Activated CD4-positive, alpha-beta T cell treated with anti-CD3 and anti-CD28 coated beads for 36 hours (primary cell): ENCODE measurements at regions of chr6 and their contacts with region 1.

Region 1: GRCh38 chr6:121055572-121056163 is 278.6 kb downstream of the TBC1D32 start:
- DNase-seq: no peak
- ATAC-seq: peak; percentile 47
- H3K4me3 Mint-ChIP-seq: no peak overlapping the region
- H3K27ac Mint-ChIP-seq: no peak overlapping the region
- H3K4me1 Mint-ChIP-seq: no peaks in the 10 kb centered on the region
- H3K27me3 Mint-ChIP-seq: no peaks in the 10 kb centered on the region

Region 2: GRCh38 chr6:121305957-121306607 is 250.4 kb after region 1 on chr6:
- CTCF ChIA-PET with region 1: interaction called, 8 read pairs
- POLR2A ChIA-PET with region 1: no interaction called
- intact Hi-C with region 1: loop called (anchors 1 kb)
- DNase-seq: no peak
- ATAC-seq: no peak
- H3K4me3 Mint-ChIP-seq: no peak overlapping the region
- H3K27ac Mint-ChIP-seq: no peak overlapping the region
- H3K4me1 Mint-ChIP-seq: peaks cover 4% of the 10 kb centered on the region
- H3K27me3 Mint-ChIP-seq: no peaks in the 10 kb centered on the region

Region 3: GRCh38 chr6:121399966-121400365 is 344.3 kb after region 1 on chr6:
- CTCF ChIA-PET with region 1: no interaction called
- POLR2A ChIA-PET with region 1: no interaction called
- intact Hi-C with region 1: loop called (anchors 1 to 5 kb)
- DNase-seq: no peak
- ATAC-seq: no peak
- H3K4me3 Mint-ChIP-seq: no peak overlapping the region
- H3K27ac Mint-ChIP-seq: no peak overlapping the region
- H3K4me1 Mint-ChIP-seq: no peaks in the 10 kb centered on the region
- H3K27me3 Mint-ChIP-seq: peaks cover 9% of the 10 kb centered on the region

Region 4: GRCh38 chr6:121849477-121849876 is 793.8 kb after region 1 on chr6:
- CTCF ChIA-PET with region 1: no interaction called
- POLR2A ChIA-PET with region 1: no interaction called
- intact Hi-C with region 1: loop called (anchors 1 to 10 kb)
- DNase-seq: peak; percentile 52
- ATAC-seq: peak; percentile 70
- H3K4me3 Mint-ChIP-seq: no peak overlapping the region
- H3K27ac Mint-ChIP-seq: no peak overlapping the region
- H3K4me1 Mint-ChIP-seq: peaks cover 14% of the 10 kb centered on the region
- H3K27me3 Mint-ChIP-seq: no peaks in the 10 kb centered on the region

Region 5: DNA sequence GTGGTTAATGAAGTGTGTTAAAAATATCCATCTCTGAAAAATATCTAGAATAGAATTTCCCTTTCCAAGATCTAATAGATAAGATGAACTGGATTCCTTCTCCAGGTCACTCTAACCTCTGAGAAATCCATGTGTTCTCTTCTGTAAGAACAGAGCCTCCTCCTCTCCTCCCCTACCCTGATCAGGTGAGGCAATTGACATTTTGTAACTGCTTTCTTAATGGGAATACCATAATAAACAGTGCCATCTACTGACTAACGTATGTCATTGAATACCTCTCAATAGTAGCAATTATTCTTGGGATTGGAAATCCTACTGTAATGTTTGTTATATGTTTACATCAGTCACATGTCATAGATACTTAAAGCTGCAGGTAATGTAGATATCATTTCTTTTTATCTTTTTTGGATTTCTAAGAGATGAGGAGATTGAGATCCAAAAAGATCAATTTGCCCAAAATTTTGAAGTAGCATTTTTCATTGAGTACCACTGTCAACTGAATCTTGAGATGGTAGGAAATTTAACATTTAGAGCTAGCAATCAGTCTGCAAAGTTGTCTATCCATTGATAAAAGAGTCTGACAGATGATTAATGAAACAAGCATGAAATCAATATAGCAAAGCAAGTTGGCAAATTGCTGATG is 978.0 kb after region 1 on chr6:
- CTCF ChIA-PET with region 1: no interaction called
- POLR2A ChIA-PET with region 1: no interaction called
- intact Hi-C with region 1: loop called (anchors 1 to 2 kb)
- DNase-seq: no peak
- ATAC-seq: peak; percentile 65
- H3K4me3 Mint-ChIP-seq: no peak overlapping the region
- H3K27ac Mint-ChIP-seq: no peak overlapping the region
- H3K4me1 Mint-ChIP-seq: no peaks in the 10 kb centered on the region
- H3K27me3 Mint-ChIP-seq: peaks cover 6% of the 10 kb centered on the region

Region 6: GRCh38 chr6:122520179-122520578 is 1464.5 kb after region 1 on chr6:
- CTCF ChIA-PET with region 1: no interaction called
- POLR2A ChIA-PET with region 1: no interaction called
- intact Hi-C with region 1: loop called in 1 of 2 experiments (anchors 10 kb)
- DNase-seq: no peak
- ATAC-seq: no peak
- H3K4me3 Mint-ChIP-seq: no peak overlapping the region
- H3K27ac Mint-ChIP-seq: no peak overlapping the region
- H3K4me1 Mint-ChIP-seq: no peaks in the 10 kb centered on the region
- H3K27me3 Mint-ChIP-seq: peaks cover 2% of the 10 kb centered on the region